ENCODE measurements at regions of chr4 and their contacts with region 1.

Region 1: DNA sequence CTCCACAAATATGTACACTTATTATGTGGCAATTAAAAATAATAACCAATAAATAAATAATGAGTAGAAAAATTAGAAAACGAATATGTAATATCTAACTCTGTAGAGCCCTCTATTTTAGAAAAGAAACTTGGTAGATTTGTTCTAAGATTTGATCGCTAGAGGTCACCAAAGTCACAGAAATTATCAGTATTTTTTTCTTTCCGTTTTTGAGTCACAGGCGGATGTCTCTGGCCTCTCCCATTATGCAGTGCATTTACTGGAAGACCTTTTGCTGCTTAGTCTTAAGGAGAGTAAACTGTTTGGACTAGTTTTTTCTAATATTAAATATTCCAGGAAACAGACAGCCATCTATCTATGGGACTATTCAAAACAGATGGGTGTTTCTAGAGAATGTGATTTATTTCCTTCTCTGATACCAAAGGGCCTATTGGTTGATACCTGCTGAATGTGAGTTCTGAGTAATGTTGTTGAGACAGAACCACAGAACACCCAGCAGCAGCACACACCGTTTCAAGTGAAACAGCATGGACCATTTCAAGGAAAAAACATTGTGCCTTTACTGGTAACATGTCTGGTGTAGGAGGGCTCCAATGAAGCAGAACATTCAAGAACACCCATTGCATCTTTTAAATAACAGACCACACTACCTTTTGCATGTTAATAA is 34.0 kb upstream of the GYPA start:
- DNase-seq: peak; percentile 22
- ATAC-seq: peak; percentile 47; the same call in 2 of the 3 replicates
- H3K4me3 ChIP-seq: no peak overlapping the region
- H3K27ac ChIP-seq: no peak overlapping the region
- H3K4me1 ChIP-seq: no peaks in the 10 kb centered on the region
- H3K27me3 ChIP-seq: no peaks in the 10 kb centered on the region
- CTCF ChIP-seq: peak; percentile 50
- EP300 ChIP-seq: no peak
- POLR2A ChIP-seq: no peak
- RAD21 ChIP-seq: no peak

Region 2: DNA sequence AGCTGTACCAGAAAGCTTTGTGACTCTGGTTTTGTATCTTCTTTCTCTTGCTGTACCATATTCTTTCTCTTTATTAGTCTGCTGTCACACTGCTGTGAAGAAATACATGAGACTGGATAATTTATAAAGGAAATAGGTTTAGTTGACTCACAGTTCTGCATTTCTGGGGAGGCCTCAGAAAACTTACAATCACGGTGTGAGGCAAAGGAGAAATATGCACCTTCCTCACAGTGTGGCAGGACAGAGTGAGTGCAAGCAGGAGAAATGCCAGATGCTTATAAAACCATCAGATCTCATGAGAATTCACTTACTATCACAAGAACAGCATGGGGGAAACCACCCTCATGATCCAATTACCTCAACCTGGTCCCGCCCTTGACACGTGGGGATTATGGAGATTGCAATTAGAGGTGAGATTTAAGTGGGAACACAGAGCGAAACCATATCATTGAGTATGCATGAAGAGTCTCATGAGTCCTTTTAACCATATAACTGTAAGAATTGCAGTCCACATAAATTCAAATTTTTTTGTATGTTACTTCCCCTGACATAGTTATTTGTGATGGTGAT is 1261.0 kb before region 1 on chr4:
- CTCF ChIA-PET with region 1: no interaction called
- POLR2A ChIA-PET with region 1: no interaction called
- in situ Hi-C with region 1: no loop called
- intact Hi-C with region 1: no loop called
- DNase-seq: no peak
- ATAC-seq: no peak
- H3K4me3 ChIP-seq: no peak overlapping the region
- H3K27ac ChIP-seq: no peak overlapping the region
- H3K4me1 ChIP-seq: no peaks in the 10 kb centered on the region
- H3K27me3 ChIP-seq: no peaks in the 10 kb centered on the region; a peak in 1 of 5 replicates
- CTCF ChIP-seq: no peak
- EP300 ChIP-seq: no peak
- POLR2A ChIP-seq: no peak
- RAD21 ChIP-seq: no peak

Region 3: DNA sequence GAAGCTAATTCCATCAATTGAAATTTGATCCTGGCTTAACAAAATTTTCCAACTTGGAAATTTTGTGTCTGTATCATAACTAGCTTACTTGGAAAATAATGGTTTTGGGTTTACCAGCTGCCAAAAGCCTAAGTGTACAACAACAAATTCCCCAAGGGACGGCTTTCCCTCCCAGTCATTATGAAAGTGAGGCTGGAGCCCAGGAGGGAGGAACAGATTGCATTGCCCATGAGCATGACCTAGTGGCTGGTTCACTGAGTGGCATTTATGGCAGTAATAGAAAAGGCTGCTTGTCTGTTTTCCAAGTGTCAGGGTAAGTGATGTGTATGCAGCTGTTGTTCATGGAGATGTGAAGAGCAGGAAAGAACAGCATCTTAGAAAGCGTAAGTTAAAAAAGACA is 400.6 kb after region 1 on chr4:
- CTCF ChIA-PET with region 1: no interaction called
- POLR2A ChIA-PET with region 1: no interaction called
- in situ Hi-C with region 1: no loop called
- intact Hi-C with region 1: loop called (anchors 10 kb)
- DNase-seq: no peak
- ATAC-seq: no peak
- H3K4me3 ChIP-seq: no peak overlapping the region
- H3K27ac ChIP-seq: no peak overlapping the region
- H3K4me1 ChIP-seq: no peaks in the 10 kb centered on the region
- H3K27me3 ChIP-seq: no peaks in the 10 kb centered on the region
- CTCF ChIP-seq: no peak
- EP300 ChIP-seq: no peak
- POLR2A ChIP-seq: no peak
- RAD21 ChIP-seq: no peak

Region 4: DNA sequence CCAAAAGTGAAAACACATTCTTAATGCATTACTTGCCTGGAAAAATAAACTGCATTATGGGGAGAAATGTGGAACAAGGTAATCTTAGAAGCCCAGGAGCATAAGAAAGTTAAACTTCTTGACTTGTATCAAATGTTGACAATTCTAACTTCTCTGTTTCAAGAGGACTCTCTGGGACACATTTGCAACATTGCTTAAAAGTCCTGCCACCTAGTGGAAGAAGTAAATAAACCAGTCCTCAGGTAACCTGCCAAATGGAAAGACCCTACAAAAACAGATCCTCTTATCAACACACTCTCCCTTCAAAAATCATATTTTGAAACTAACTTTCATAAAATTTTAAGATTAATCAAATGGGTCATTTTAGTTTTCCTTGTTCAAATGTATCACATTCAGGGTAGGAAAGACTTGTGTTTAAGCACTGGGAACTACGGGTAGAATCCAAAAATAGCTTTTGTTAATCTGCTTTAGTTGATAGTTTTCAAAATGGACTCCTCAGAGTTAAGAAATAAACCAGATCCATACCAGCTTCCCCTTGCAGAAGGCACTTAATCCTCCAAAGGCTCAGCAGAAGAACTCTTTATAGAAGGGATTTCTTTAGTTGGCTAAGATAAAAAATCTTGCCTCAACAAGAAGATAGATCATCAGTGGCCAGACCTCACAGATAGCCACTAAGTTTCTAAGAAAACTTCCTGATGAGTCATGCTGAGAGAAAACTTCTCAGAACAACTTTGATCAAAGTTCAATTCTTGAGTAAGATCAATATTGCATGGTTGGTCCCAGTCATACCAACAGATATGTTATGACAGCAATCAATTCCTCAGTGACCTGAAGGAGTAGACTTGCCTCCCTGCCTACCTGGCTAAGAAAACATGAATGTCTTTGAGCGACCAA is 613.1 kb after region 1 on chr4:
- CTCF ChIA-PET with region 1: interaction called, 4 read pairs
- POLR2A ChIA-PET with region 1: no interaction called
- in situ Hi-C with region 1: loop called (anchors 25 kb)
- intact Hi-C with region 1: no loop called
- DNase-seq: peak; percentile 34
- ATAC-seq: no peak; the same call in 2 of the 3 replicates
- H3K4me3 ChIP-seq: no peak overlapping the region
- H3K27ac ChIP-seq: no peak overlapping the region
- H3K4me1 ChIP-seq: no peaks in the 10 kb centered on the region
- H3K27me3 ChIP-seq: no peaks in the 10 kb centered on the region
- CTCF ChIP-seq: peak; percentile 48
- EP300 ChIP-seq: no peak
- POLR2A ChIP-seq: no peak
- RAD21 ChIP-seq: no peak

Region 5: GRCh38 chr4:145061318-145061920 is 886.9 kb after region 1 on chr4:
- CTCF ChIA-PET with region 1: interaction called, 4 read pairs
- POLR2A ChIA-PET with region 1: no interaction called
- in situ Hi-C with region 1: loop called (anchors 10 kb)
- intact Hi-C with region 1: loop called (anchors 1 kb)
- DNase-seq: peak; percentile 41
- ATAC-seq: peak; percentile 55; the same call in 1 of the 3 replicates
- H3K4me3 ChIP-seq: no peak overlapping the region
- H3K27ac ChIP-seq: no peak overlapping the region
- H3K4me1 ChIP-seq: peaks cover 8% of the 10 kb centered on the region; the same call in 1 of the 2 replicates
- H3K27me3 ChIP-seq: no peaks in the 10 kb centered on the region
- CTCF ChIP-seq: peak; percentile 54
- EP300 ChIP-seq: no peak
- POLR2A ChIP-seq: no peak
- RAD21 ChIP-seq: no peak

Region 6: DNA sequence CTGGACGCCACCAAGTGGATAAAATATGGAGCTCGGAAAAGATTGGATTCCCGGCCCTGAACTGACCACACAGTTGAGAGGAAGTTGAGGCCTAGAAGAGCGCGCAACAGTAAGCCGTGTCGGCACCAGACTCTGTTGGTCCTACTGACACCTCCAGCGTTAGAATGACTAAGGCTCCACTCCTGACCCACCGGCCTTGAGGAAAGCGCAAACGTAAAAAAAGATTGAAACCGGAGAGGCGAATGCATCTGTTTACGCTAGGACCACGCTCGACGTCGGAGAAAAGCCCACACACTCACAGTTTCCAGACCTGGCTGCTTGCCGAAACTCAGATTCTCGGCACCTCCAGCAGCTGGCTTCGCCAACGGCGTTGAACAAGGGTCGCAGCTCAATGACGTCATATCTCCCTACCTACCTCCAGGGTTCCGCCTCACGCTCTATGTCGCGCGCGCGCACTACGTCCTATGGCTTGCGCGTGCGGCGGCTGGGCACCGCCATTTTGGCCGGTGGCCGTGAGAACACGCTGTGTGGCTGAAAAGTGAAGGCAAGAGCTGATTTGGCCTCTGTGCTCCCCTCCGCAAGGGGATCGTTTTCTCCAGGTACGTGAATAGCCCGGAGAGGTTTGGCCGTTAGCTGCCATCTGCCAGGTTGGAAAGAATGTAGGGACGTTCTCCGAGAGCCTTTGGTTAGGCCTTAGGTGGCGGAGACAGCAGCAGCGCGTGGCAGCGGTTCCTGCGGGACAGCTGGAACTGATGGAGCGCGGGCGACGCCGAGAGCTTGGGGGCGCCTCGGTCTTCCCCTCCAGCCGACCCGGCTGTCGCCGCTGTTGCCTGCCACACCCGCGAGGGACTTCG is 923.5 kb after region 1 on chr4 and contains the starts of genes ABCE1 and ANAPC10:
- CTCF ChIA-PET with region 1: no interaction called
- POLR2A ChIA-PET with region 1: no interaction called
- in situ Hi-C with region 1: no loop called
- intact Hi-C with region 1: loop called (anchors 10 kb)
- DNase-seq: peak; percentile 94
- ATAC-seq: peak; percentile 94
- H3K4me3 ChIP-seq: peak within 1 kb of the TSS; percentile 71 to 91 (median 85)
- H3K27ac ChIP-seq: peak within 1 kb of the TSS; percentile 96
- H3K4me1 ChIP-seq: peaks cover 41% of the 10 kb centered on the region
- H3K27me3 ChIP-seq: no peaks in the 10 kb centered on the region; a peak in 1 of 5 replicates
- CTCF ChIP-seq: peak; percentile 47; the same call in 1 of the 2 replicates
- EP300 ChIP-seq: no peak
- POLR2A ChIP-seq: peak; percentile 90 to 97
- RAD21 ChIP-seq: 0 out of 2 replicates have a peak, but pooled peaks have one; percentile 9
- total RNA-seq, gene ABCE1: 139 and 226 TPM in 2 replicates
- total RNA-seq, gene ANAPC10: 32.7 and 37.8 TPM in 2 replicates

Region 7: GRCh38 chr4:145234091-145234706 is 1059.7 kb after region 1 on chr4:
- CTCF ChIA-PET with region 1: no interaction called
- POLR2A ChIA-PET with region 1: no interaction called
- in situ Hi-C with region 1: no loop called
- intact Hi-C with region 1: loop called (anchors 2 kb)
- DNase-seq: peak; percentile 61
- ATAC-seq: peak; percentile 99
- H3K4me3 ChIP-seq: no peak overlapping the region
- H3K27ac ChIP-seq: no peak overlapping the region
- H3K4me1 ChIP-seq: no peaks in the 10 kb centered on the region
- H3K27me3 ChIP-seq: no peaks in the 10 kb centered on the region
- CTCF ChIP-seq: peak; percentile 79
- EP300 ChIP-seq: no peak
- POLR2A ChIP-seq: no peak
- RAD21 ChIP-seq: peak; percentile 77